PC-9 (cell line): ENCODE measurements at regions of chr19 and their contacts with region 1.

Region 1: GRCh38 chr19:13150187-13150930 is at the starts of genes IER2 and STX10:
- DNase-seq: peak; percentile 87 to 91
- H3K4me3 ChIP-seq: peak within 1 kb of the TSS; percentile 83
- H3K27ac ChIP-seq: peak within 1 kb of the TSS; percentile 96
- H3K4me1 ChIP-seq: peaks cover 28% of the 10 kb centered on the region
- H3K27me3 ChIP-seq: no peaks in the 10 kb centered on the region
- CTCF ChIP-seq: peak; percentile 66
- total RNA-seq, gene IER2: 72.7 and 95.5 TPM in 2 replicates
- total RNA-seq, gene STX10: 86.2 and 89.6 TPM in 2 replicates

Region 2: GRCh38 chr19:12890787-12891552 is 259.4 kb before region 1 on chr19 and contains the start of gene GCDH:
- CTCF ChIA-PET with region 1: no interaction called
- POLR2A ChIA-PET with region 1: interaction called, 11 read pairs
- intact Hi-C with region 1: no loop called
- DNase-seq: peak; percentile 96 to 99
- H3K4me3 ChIP-seq: peak within 1 kb of the TSS; percentile 85
- H3K27ac ChIP-seq: no peak within 1 kb of the TSS
- H3K4me1 ChIP-seq: peaks cover 8% of the 10 kb centered on the region
- H3K27me3 ChIP-seq: no peaks in the 10 kb centered on the region
- CTCF ChIP-seq: no peak
- total RNA-seq, gene GCDH: 23.2 and 27.8 TPM in 2 replicates

Region 3: DNA sequence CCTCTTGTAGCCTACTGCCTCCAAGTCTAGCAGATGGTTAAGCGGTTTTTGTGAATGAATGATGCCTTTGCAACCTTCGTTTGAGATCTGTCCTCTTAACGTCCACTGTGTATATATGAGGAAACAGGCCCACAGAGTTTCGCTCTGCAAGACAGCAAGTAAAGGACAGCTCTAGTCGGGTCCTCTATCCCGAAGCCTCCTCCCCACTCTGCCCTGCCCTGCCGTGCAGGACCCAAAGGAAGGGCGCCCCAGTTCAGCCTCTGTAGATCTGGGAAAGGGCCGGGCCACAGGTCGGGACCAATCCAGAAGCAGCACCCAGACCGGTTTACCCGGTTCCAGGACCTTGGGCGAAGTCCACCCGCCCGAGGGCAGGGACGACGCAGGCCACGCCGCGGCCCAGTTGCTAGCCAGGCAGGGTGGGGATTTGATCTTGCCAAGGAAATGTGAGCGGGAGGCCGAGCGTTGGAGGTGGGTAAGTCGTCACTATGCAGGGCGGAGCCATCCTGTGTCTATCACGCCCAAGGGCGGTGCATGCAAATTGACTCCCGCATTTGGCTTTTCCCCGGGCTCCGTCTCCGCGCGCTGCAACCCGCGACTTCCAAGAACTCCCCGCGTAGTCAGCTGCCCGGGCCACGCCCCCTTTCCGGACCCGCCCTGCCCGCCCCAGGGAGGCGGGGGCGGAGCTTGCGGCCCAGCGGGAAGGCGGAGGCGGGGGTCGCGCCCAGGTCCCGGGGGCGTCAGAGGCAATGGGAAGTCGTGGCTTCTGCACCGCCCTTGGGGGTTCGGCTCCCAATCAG is 12.4 kb after region 1 on chr19:
- CTCF ChIA-PET with region 1: interaction called, 10 read pairs
- POLR2A ChIA-PET with region 1: interaction called, 19 read pairs
- intact Hi-C with region 1: loop called (anchors 1 kb)
- DNase-seq: peak; percentile 99
- H3K4me3 ChIP-seq: peak overlapping the region; percentile 63
- H3K27ac ChIP-seq: peak overlapping the region; percentile 99
- H3K4me1 ChIP-seq: peaks cover 66% of the 10 kb centered on the region
- H3K27me3 ChIP-seq: no peaks in the 10 kb centered on the region
- CTCF ChIP-seq: peak; percentile 27

Region 4: GRCh38 chr19:13228561-13228960 is 78.2 kb after region 1 on chr19:
- CTCF ChIA-PET with region 1: no interaction called
- POLR2A ChIA-PET with region 1: interaction called, 17 read pairs
- intact Hi-C with region 1: no loop called
- DNase-seq: no peak
- H3K4me3 ChIP-seq: no peak overlapping the region
- H3K27ac ChIP-seq: no peak overlapping the region
- H3K4me1 ChIP-seq: peaks cover 11% of the 10 kb centered on the region
- H3K27me3 ChIP-seq: peaks cover 18% of the 10 kb centered on the region
- CTCF ChIP-seq: no peak; the same call in 1 of the 2 replicates

Region 5: DNA sequence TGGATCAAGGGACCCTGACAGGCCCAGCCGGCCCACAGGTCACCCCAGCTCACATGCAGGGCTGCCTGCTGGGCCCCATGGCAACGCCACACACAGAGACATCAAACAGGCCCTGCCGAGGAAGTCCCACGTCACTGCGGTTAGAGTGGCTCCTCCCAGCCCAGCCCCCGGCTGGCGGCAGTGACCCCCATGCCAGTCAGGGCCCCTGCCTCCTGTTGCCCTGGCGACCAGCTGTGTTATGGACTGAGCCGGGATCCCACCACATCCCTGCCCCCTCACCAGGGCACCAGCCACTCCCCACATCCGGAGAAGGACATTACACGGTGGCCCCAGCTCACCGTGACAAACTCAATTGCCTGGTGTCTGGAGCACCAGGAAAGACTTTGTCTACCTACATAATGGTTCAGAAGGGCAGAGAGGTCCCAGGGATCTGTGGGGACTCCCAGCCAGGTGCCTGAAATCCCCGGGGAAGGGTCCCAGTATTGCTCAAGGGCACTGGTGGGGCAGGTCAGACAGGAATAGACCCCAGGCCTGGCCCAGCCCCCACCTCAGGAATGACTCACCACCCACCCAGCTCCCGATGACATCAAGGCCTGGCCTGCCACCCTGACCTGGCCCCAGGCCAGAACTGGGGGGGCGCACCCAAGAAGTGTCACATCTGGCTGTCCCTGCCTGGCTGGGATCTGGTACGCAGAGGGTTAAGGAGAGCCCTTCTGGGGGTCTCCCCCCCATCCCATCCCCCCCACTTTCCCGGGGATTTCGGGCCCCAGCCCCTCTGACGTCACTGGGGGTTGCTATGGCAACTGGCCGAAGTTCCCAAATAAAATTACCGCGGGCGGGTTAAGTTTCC is 696.4 kb after region 1 on chr19:
- CTCF ChIA-PET with region 1: no interaction called
- POLR2A ChIA-PET with region 1: no interaction called
- intact Hi-C with region 1: loop called (anchors 5 kb)
- DNase-seq: peak; percentile 93 to 97
- H3K4me3 ChIP-seq: peak overlapping the region; percentile 77
- H3K27ac ChIP-seq: peak overlapping the region; percentile 97
- H3K4me1 ChIP-seq: peaks cover 70% of the 10 kb centered on the region
- H3K27me3 ChIP-seq: no peaks in the 10 kb centered on the region
- CTCF ChIP-seq: no peak